Cardiac septum (tissue), 1 donor: ENCODE measurements at regions of chr10 and their contacts with region 1.

Region 1: DNA sequence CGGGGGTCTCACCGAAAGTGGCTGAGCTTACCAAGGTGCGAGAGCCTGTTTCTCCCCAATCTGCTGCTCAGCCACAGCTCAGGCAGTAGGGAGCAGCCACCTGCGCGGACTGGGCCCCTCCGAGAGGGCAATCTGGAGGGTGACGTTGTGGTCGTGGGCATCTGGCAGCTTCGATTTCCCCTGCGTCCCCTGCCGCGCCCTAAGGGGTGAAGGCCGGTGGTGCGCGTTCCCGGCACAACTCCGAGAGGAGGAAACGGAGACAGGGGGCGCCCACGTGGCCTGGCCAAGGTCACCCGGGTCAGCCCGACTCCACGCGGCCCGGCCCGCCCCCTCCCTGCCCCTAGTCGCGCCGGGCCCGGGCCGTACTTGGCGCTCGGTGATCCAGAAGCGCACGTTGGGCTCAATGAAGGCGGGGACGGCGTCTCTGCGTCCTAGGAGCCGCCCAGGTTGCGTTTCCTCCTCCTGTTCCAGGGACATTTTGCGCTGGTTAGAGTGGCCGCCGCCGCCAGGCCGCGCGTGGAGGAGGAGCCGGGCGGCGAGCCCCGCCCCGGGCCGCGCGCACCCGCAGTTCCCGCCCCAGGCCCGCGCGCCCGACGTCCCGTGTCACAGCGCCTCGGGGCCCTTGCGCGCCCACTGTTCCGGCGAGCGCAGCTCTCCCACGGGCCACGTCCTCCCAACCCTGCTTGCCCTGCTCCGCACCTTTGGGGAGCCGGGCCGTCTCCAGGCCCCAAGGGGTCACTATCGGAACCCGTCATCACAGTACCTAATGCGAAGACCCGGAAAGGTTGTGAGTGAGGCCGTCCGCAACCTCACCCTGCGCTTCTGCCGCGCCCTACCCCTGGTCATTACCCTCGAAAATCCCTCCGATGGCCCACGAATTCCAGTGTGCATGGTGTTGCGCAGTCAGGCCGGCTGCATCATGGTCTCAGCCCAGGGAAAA is at the start of gene SFXN4:
- DNase-seq: peak; percentile 93
- total RNA-seq, gene SFXN4: 44.0 TPM

Region 2: GRCh38 chr10:119149723-119150122 is 15.7 kb before region 1 on chr10:
- intact Hi-C with region 1: no loop called
- DNase-seq: no peak

Region 3: DNA sequence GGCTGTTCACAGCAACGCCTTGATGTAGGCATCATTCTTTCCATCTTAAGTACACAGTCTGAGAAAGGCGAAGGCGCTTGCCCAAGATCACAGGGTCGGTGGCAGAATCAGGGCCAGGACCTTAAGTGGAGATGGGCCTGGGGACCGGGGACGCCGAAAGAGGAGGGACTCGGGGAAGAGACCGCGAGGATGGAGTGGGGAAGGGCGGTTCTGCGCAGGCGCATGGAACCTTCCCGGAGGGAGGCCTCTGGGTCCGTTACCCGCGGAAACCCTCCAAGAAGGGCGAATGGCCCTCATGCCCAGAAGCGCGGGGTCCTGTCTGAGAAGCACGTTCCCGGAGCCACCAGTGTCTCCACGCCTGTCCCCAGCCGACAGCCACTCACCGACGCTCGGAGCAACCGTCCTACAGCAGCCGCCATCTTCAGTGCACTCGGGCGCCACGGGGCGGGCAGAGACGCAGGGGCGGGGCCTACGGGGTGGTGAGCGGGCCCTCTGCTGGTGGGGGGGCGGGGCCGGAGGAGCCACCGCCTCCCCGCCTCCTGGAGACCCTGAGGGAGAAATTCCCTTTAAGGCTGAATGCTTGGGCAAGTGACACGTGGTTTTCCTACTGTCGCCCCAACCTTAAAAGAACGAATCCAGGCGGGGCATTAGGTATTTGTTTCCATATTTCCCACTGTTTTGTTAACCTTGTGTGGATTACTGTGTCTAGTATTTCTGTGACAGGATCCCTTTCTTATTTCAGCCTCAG is 13.1 kb after region 1 on chr10 and contains the start of gene PRDX3:
- intact Hi-C with region 1: loop called (anchors 2 kb)
- DNase-seq: peak; percentile 96
- total RNA-seq, gene PRDX3: 220 TPM